Vagina (tissue), 2 donors: ENCODE measurements at regions of chr3 and their contacts with region 1.

Region 1: DNA sequence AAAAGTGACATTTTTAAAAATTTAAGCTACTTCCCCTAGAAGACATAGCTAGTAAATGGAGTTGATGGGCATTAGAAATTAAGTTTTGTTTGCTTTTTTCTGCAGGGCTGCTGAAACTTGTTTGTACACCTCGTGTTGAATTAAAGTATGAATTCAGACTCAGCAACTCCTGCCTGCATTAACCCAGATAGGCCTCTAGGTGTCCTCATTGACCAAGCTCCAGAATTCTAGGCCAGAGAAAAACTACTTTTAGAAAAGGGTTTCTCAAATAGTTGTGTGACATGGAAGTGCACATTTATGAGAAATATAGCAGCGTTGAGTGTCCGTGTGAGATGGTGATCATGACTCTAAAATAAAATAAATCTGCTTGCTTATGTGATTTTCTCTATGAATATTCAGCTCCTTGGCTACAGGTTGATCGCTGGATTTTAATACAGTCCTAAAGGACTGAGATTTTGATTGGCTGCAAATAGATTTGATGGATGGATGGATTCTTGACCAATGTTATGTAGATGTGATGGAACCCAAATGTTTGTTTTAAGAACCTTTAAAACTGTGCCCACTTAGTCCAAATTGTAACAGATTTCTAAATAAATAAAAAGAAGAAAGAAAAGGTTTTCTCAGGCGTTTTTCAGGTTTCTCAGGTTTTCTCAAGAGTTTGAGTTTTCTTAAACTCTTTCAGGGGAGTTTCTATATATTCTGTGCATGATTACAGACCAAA is 39.4 kb upstream of the LMOD3 start:
- DNase-seq: no peak
- H3K4me3 ChIP-seq: no peak overlapping the region
- H3K27ac ChIP-seq: no peak overlapping the region
- H3K4me1 ChIP-seq: no peaks in the 10 kb centered on the region
- H3K27me3 ChIP-seq: no peaks in the 10 kb centered on the region
- CTCF ChIP-seq: peak; percentile 70 to 96 (median 90)
- POLR2A ChIP-seq: no peak

Region 2: DNA sequence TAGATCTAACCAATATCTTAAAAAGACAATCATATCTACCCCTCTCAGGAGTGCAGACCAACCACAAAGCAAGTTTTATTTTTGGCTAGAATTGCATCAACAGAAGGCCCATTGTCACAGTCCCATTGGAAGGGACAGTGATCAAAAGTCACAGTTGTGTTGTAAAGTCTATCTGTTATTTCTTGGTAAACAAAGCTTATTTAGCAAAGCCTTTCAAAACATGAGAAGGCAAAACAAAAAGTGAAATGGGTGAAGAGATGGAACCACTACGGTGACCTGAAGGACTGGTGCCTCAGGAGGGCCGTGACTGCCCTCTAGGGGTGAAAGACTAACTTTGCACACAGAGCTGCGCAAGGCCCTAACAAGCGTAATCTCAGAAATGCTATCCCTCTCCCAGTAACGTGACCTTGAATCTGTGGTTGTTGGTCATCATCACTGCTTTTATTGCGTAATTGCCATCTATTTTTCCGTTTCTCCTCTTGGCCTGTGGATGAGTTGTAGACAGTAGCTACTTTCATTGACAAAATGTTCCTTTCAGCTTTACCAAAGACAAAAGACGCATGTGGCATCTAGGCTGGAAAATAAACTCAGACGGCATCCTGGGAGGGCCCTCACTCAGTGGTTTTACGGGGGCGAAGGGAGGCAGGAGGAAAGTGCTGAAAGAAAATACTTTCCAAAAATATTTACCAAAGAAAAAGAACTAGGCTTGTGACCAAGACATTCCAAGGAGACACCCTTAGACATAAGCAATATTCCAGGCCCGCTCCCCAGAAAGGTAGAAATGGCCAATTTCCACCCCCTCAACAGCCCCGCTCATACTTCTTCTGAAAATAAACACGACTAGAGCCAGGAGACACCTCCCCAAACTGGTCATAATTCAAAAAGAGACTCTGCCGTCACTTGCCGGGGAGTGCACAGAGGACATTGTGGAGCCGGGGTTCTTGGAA is 144.8 kb after region 1 on chr3:
- intact Hi-C with region 1: loop called (anchors 10 kb)
- DNase-seq: peak in 1 of 2 donors; percentile 95
- H3K4me3 ChIP-seq: no peak overlapping the region
- H3K27ac ChIP-seq: peak overlapping the region; percentile 63
- H3K4me1 ChIP-seq: no peaks in the 10 kb centered on the region
- H3K27me3 ChIP-seq: no peaks in the 10 kb centered on the region
- CTCF ChIP-seq: peak; percentile 65 to 95 (median 83)
- POLR2A ChIP-seq: no peak

Region 3: GRCh38 chr3:69628951-69629350 is 467.2 kb after region 1 on chr3:
- intact Hi-C with region 1: no loop called
- DNase-seq: no peak
- H3K4me3 ChIP-seq: no peak overlapping the region
- H3K27ac ChIP-seq: no peak overlapping the region
- H3K4me1 ChIP-seq: no peaks in the 10 kb centered on the region
- H3K27me3 ChIP-seq: no peaks in the 10 kb centered on the region
- CTCF ChIP-seq: no peak
- POLR2A ChIP-seq: no peak

Region 4: DNA sequence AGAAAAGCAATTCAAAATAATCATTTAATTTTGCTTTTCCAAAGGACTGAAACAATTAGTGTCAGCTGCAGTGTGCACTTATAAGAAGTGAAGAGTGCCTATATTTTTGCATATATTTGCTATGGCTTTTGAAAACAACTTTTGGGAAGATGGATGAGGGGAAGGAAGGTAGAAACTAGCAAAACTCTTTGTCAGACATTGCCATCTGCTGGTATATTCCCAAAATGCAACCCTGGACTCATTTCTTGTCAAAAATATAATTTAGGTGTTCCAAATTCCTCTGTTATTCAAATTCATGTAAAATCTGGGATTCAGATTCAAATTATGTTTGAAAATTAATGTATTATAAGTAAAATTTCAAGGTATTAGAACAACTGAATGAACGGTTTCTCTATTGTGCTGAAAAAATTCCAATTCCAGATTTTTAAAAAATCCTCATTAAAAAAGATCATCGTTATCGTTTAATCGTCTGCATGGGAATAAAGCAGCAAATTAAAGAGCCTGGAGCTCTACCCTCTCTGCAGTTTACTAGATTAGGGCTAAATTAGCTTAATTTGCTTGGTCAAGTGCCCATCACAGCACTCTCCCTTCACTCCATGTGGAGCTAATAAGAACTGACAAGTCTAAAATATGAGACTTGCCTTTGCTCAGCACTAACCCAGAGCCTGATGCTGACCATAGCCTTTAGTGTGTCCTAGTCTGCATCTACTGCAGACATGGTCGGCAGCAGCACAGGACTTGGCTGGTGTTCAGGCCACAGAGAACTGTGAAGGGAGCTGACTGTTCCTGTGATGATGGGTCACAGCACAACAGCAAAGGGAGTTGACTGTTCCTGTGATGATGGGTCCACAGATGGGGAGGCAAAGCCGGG is 509.6 kb after region 1 on chr3:
- intact Hi-C with region 1: loop called (anchors 10 kb)
- DNase-seq: no peak
- H3K4me3 ChIP-seq: no peak overlapping the region
- H3K27ac ChIP-seq: no peak overlapping the region
- H3K4me1 ChIP-seq: peaks cover 8% of the 10 kb centered on the region
- H3K27me3 ChIP-seq: no peaks in the 10 kb centered on the region
- CTCF ChIP-seq: peak; percentile 64 to 70 (median 67)
- POLR2A ChIP-seq: no peak